Mucosa of descending colon (tissue), 3 donors: ENCODE measurements at regions of chr3 and their contacts with region 1.

Region 1: GRCh38 chr3:102229062-102229655 is 205.7 kb upstream of the ZPLD1 start:
- DNase-seq: peak in 2 of 3 donors; percentile 80 to 89
- ATAC-seq: peak; percentile 86
- H3K4me3 ChIP-seq: no peak overlapping the region
- H3K4me1 ChIP-seq: no peaks in the 10 kb centered on the region
- CTCF ChIP-seq: peak; percentile 90

Region 2: GRCh38 chr3:101573449-101574387 is 655.4 kb before region 1 on chr3 and contains the start of gene PCNP:
- intact Hi-C with region 1: no loop called
- DNase-seq: peak; percentile 99 to 100 (median 99)
- ATAC-seq: peak; percentile 96
- H3K4me3 ChIP-seq: peak within 1 kb of the TSS; percentile 95
- H3K4me1 ChIP-seq: peaks cover 19% of the 10 kb centered on the region
- CTCF ChIP-seq: peak; percentile 78
- total RNA-seq, gene PCNP: 78.0 to 168 (median 94.3) TPM

Region 3: GRCh38 chr3:101809178-101810021 is 419.8 kb before region 1 on chr3:
- intact Hi-C with region 1: loop called (anchors 2 to 5 kb)
- DNase-seq: peak in 1 of 3 donors; percentile 46
- ATAC-seq: peak; percentile 76
- H3K4me3 ChIP-seq: no peak overlapping the region
- H3K4me1 ChIP-seq: peaks cover 7% of the 10 kb centered on the region
- CTCF ChIP-seq: peak; percentile 20

Region 4: DNA sequence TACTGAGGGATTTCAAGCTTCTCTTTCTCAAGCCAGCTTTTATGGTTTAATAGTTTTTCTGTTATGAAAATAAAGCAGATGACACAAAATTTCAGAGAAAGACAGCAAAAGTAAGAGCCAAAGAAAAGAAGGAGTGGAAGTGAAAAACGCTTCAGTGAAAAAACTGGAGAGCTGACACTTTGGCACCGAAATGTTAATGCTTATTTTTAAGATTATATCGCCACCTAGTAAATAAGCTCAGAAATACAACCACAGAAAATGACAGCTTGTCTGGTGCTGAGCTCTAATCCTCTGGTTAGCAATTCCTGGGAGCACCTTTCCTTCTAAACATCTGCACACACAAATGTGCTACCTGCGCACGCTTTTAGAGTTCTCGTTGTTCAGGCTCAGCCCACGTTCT is 307.3 kb after region 1 on chr3:
- intact Hi-C with region 1: loop called in 1 of 2 experiments (anchors 5 kb)
- DNase-seq: no peak
- ATAC-seq: peak; percentile 45
- H3K4me3 ChIP-seq: no peak overlapping the region
- H3K4me1 ChIP-seq: no peaks in the 10 kb centered on the region
- CTCF ChIP-seq: no peak